ENCODE measurements at regions of chr3 and their contacts with region 1.

Region 1: DNA sequence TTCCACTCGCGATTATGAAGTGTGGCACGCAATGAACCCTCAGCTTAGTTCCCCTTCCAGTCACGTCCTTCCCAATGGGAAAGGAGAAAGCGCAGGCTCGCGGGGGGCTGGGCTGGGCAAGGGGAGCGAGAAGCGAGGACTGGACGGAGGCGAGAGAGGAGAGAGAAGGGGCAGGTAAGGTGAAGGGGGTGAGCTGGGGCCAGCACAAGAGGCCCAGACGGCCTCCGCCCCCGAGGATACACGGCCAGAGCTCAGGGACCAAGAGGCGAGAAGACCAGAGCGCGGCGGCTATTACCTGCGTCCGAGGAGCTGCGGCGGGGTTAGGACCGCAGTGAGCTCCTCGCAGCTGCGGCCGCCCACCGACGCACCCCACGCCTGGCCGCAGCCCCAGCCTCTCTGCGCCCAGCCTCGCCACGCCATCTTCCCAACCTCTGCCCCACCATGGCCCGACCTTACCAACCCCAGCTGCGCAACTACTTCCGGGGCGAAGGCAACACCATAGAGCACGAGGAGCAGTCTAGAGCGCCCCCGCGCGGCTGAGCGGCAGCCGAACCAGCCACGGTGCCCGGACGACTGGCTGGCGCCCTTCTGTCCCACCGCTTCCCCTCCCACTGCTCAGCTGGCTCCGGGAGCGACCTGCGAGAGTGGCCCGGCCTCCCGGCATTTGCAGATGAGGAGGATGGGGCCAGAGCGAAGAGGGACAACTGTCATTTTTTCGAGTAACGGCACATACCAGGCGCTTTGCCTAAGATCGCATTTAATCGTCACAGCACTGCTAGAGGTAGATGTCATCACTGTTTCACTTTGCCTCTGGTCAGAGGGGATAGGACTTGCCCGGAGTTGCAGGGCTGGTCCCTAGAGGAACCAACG is at the start of gene PARL:
- DNase-seq: peak; percentile 97
- H3K4me3 Mint-ChIP-seq: peak within 1 kb of the TSS; percentile 95
- H3K27ac Mint-ChIP-seq: peak within 1 kb of the TSS; percentile 94
- H3K4me1 Mint-ChIP-seq: peaks cover 34% of the 10 kb centered on the region
- H3K27me3 Mint-ChIP-seq: peaks cover 2% of the 10 kb centered on the region
- total RNA-seq, gene PARL: 40.7 to 41.4 TPM

Region 2: DNA sequence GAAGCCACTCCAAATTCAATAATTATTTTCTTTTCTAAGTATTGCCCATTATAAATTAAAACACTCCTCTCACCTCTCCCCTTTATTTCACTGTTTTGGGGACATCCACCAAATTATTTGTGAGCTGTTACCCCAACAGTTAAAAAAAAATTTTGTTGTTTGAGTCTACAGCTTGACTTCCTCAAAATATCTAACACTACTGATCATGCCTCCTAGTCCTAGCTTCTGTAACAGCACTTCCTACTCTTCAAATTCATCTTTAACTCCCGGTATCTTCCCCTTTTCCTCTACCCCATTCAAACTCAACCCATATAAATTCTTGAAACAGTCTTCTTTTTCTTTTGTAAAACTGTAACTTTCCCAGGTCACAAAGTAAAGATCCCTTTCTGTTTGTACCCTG is 15.9 kb before region 1 on chr3:
- CTCF ChIA-PET with region 1: interaction called, 15 read pairs
- POLR2A ChIA-PET with region 1: no interaction called
- DNase-seq: no peak
- H3K4me3 Mint-ChIP-seq: no peak overlapping the region
- H3K27ac Mint-ChIP-seq: no peak overlapping the region
- H3K4me1 Mint-ChIP-seq: peaks cover 19% of the 10 kb centered on the region
- H3K27me3 Mint-ChIP-seq: no peaks in the 10 kb centered on the region

Region 3: GRCh38 chr3:183895296-183895695 is 10.6 kb after region 1 on chr3:
- CTCF ChIA-PET with region 1: interaction called, 42 read pairs
- POLR2A ChIA-PET with region 1: no interaction called
- DNase-seq: peak; percentile 52
- H3K4me3 Mint-ChIP-seq: no peak overlapping the region
- H3K27ac Mint-ChIP-seq: no peak overlapping the region
- H3K4me1 Mint-ChIP-seq: no peaks in the 10 kb centered on the region
- H3K27me3 Mint-ChIP-seq: peaks cover 10% of the 10 kb centered on the region

Measured in activated CD4-positive, alpha-beta T cell treated with anti-CD3 and anti-CD28 coated beads, Interleukin-2, amount 10 ng/mL, durations not matched to agents 7 days and 5 days (primary cell).